ENCODE measurements at regions of chr19 and their contacts with region 1.

Region 1: GRCh38 chr19:29873024-29873800 is 61.4 kb downstream of the CCNE1 start:
- DNase-seq: peak; percentile 90

Region 2: DNA sequence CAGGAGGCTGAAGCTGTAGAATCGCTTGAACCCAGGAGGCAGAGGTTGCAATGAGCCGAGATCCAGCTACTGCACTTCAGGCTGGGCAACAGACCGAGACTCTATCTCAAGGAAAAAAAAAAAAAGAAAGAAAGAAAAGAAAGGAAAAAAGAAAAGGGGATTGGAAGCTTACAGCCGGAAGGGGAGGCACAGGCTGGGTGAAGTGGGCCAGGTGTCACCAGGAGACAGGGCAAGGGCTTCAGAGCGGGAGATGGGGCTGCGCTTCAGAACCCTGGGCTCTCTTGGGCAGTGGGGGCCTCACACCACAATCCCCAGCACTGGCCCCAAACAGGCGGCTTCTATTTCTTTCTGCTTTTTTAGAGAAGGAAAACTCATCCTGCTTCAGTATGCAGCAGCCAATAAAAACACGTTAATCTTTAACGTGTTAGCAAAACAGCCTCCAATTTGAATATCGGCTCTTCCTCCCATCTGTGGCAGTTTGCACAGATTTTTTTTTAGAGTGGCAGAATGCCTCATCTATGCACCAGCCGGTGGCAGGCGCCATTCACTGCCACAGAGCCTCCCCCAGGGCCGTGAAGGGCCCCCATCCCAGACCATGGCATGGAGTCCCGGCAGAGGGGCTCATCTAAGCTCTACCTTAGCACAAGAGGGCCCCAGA is 111.5 kb before region 1 on chr19:
- intact Hi-C with region 1: loop called in 1 of 2 experiments (anchors 10 kb)
- DNase-seq: no peak

Region 3: DNA sequence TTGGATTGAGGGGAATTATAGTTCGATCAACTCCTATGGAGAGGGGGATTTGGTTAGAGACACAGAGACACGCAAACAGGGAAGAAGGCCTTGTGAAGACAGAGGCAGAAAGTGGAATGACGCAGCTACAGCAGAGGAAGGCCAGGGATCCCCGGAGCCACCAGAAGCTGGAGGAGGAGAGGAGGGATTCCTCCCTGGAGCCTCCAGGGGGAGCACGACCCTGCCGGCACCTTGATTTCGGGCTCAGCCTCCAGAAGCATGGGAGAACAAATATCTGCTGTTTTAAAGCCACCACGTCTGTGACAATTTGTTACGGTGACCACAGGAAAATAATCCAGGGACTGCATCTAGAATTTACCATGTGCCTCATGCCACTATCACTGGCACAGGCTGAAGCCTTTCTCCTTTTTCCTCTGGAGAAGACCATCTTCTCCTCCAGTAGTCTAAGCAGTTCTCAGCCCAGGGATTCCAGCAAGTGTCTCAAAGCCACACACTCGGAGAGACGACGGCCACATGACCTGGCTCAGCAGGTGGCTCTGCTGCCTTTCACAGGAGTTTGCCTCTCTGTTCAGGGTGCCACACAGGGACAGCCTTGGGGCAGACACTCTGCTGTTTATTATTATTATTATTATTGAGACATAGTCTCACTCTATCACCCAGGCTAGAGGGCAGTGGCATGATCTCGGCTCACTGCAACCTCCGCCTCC is 101.4 kb before region 1 on chr19:
- intact Hi-C with region 1: loop called (anchors 5 to 10 kb)
- DNase-seq: no peak

Region 4: DNA sequence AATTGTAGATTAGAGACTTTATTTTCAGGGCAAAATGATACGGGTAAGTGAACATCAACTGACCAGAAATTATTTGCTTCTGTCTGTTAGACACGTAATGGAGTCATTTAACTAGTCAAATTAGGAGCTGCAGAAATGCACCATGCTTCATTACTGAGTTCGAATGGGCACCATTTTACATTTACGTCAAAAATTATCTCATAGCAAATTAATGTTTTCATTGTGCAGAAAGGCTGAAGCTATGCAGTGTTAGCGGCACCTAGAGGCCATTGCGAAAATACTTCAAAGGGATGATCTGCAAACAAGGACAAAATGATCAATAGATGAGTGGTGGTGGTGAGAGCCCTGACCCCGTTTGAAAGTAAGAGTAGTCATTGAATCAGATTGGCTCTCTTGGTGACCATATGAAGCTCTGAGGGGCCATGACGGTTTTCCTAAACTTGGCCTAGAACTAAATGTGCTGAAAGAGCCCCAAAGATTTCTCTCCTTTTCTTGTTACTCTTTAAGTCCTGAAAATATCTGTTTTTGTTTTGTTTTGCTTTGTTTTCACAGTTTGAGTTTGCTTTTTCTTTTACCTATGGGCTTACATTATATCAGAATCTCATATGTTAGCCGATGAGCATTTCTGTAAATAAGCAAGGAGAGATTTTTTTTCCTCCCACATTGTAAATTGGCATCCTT is 776.9 kb after region 1 on chr19:
- intact Hi-C with region 1: loop called in 1 of 2 experiments (anchors 10 kb)
- DNase-seq: no peak